A549 (cell line): ENCODE measurements at regions of chr17 and their contacts with region 1.

Region 1: DNA sequence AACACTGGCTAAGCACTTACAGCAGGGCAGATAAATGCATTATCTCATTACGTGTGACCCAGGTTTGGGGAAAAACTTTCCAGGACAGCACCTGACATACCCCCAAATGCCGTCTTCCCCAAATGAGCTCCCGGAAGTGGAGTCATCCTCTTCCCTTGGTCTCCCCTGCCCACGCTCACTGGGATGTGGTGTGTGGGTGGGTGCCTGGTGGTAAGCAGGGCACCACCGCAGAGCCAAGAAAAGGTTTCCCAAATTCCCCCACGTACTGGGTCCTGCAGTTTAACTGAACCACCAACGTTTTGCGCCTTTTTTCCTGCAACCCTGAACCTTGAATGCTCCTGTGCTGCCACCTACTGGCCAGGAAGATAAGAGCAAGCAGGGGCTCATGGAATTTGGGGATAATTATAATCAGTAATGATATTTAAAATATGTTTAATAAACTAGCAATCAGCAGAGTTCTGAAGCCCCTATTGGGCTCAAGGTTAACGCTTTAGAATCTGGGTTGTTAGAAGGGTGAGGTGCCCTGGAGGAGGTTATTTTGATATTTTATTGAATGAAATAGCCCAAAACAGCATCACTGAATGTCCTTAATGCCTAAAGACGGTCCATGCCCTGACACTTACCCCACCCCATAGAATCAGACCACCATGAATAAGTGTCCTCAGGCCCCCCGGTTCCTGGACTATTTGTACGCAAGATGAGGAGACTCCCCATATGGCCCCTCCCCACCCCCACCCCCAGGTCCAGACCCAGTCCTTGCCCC is 8.0 kb downstream of the SPPL2C start:
- DNase-seq: peak; percentile 57 to 70
- ATAC-seq: peak; percentile 25 to 73; a peak in 4 of 6 replicates
- H3K4me3 ChIP-seq: peak overlapping the region; percentile 14; the same call in 1 of the 3 replicates
- H3K27ac ChIP-seq: peak overlapping the region in 1 of 2 experiments; percentile 61; a peak in 1 of 6 replicates
- H3K4me1 ChIP-seq: 0 out of 3 replicates have a peak, but pooled peaks cover 2% of the 10 kb centered on the region
- CTCF ChIP-seq: peak; percentile 97
- EP300 ChIP-seq: no peak
- POLR2A ChIP-seq: no peak
- RAD21 ChIP-seq: peak; percentile 94 to 95

Region 2: DNA sequence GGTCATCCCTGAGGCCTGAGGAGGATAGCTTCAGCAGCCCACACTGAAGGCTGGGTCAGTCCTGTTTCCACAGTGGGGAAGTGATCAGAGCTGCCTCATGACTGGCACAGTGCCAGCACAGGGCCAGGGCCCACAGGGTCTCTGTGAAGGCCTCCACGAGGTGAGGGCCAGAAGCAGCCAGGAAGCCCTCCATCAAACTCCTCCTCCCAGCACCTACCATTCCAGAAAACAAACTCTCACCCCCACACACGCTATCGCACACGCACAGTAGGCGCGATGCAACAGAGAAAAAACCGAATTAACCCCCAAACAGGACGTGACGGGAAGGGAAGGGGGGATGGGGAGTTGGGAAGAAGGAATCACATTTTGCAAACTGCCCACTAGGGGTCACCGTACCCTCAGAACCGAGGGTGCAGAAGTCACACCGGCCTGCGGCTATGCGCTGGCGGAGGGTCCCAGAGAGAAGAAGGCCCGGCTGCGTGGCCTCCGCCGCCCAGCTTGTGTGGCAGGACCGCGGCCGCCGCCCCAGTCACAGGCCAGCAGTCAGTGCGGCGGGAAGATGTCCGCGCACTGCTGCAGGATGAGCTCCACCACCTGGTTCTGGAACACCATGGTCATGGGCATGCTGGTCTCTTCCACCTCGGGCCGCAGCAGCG is 457.7 kb before region 1 on chr17:
- CTCF ChIA-PET with region 1: interaction called, 12 read pairs
- POLR2A ChIA-PET with region 1: no interaction called
- DNase-seq: peak; percentile 88 to 95
- ATAC-seq: peak; percentile 68 to 83
- H3K4me3 ChIP-seq: no peak overlapping the region
- H3K27ac ChIP-seq: peak overlapping the region; percentile 23 to 73; a peak in 3 of 6 replicates
- H3K4me1 ChIP-seq: 0 out of 3 replicates have a peak, but pooled peaks cover 3% of the 10 kb centered on the region
- CTCF ChIP-seq: peak; percentile 97
- EP300 ChIP-seq: no peak
- POLR2A ChIP-seq: no peak
- RAD21 ChIP-seq: peak; percentile 89 to 90

Region 3: DNA sequence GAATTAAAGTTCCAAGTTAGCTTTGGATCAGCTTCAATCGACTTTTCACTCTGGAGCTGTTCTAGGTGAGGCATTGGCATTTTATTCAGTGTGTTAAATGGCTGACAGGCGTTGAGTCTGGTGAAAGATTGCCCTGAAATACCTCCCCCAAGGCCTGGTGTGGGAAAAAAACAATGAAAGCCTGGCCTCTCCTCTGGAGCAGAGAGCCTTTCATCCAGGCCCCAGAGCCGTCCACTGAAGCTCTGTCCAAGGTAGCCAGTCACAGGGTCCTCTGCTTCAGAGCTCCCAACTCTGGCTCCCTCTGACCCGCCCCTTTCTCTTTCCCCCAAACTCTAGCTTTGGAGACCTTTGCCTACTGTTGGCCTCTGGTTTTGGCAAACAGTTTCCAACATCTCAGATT is 192.2 kb before region 1 on chr17:
- CTCF ChIA-PET with region 1: interaction called, 17 read pairs
- POLR2A ChIA-PET with region 1: no interaction called
- DNase-seq: no peak
- ATAC-seq: no peak
- H3K4me3 ChIP-seq: no peak overlapping the region
- H3K27ac ChIP-seq: no peak overlapping the region
- H3K4me1 ChIP-seq: no peaks in the 10 kb centered on the region
- CTCF ChIP-seq: no peak
- EP300 ChIP-seq: no peak
- POLR2A ChIP-seq: no peak
- RAD21 ChIP-seq: no peak

Region 4: GRCh38 chr17:45677770-45678169 is 174.9 kb before region 1 on chr17:
- CTCF ChIA-PET with region 1: interaction called, 12 read pairs
- POLR2A ChIA-PET with region 1: no interaction called
- DNase-seq: peak in 1 of 2 experiments; percentile 29
- ATAC-seq: peak; percentile 48 to 54; a peak in 4 of 6 replicates
- H3K4me3 ChIP-seq: no peak overlapping the region
- H3K27ac ChIP-seq: no peak overlapping the region
- H3K4me1 ChIP-seq: no peaks in the 10 kb centered on the region
- CTCF ChIP-seq: no peak
- EP300 ChIP-seq: no peak
- POLR2A ChIP-seq: no peak
- RAD21 ChIP-seq: no peak

Region 5: DNA sequence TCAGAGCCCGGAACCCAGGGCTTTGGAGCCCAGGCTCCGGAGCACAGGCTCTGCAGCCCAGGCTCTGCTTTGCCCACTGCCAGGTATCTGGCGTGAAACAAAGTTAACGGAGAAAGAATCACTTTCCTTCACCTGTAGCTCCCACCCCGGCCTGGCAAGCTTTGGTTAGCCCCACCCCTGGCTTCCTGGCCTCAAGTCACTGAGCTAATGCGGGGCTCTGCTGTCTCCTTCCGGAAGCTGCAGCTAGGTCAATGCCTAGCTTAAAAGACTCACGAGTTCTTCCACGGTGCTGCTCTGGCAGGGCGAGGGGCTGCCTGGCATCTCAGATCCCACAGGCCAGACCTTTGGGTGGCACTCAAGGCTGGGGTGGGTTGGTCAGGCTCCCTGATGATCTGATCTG is 29.1 kb before region 1 on chr17:
- CTCF ChIA-PET with region 1: interaction called, 15 read pairs
- POLR2A ChIA-PET with region 1: no interaction called
- DNase-seq: no peak
- ATAC-seq: no peak
- H3K4me3 ChIP-seq: no peak overlapping the region
- H3K27ac ChIP-seq: no peak overlapping the region
- H3K4me1 ChIP-seq: no peaks in the 10 kb centered on the region
- CTCF ChIP-seq: no peak
- EP300 ChIP-seq: no peak
- POLR2A ChIP-seq: no peak
- RAD21 ChIP-seq: no peak

Region 6: DNA sequence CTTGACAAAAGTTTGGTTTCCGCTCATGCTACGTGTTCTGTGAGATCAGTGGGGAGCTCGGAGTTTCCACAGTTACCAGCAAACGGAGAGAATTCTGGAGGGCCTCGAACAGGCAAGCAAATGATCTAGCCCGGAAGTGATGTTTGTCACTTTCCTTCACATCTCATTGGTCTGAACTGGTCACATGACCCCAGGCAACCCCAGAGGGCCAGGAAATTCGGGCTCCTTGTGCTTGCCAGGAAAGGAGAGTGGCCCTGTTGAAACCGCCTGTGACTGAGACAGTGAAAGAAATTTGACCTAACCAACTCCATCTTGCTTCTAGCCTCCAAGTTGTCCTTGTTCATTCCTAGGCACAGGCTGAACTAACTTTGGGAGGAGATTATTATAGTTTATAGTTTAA is 15.0 kb after region 1 on chr17:
- CTCF ChIA-PET with region 1: interaction called, 67 read pairs
- POLR2A ChIA-PET with region 1: no interaction called
- DNase-seq: no peak
- ATAC-seq: no peak
- H3K4me3 ChIP-seq: no peak overlapping the region
- H3K27ac ChIP-seq: no peak overlapping the region
- H3K4me1 ChIP-seq: no peaks in the 10 kb centered on the region
- CTCF ChIP-seq: no peak
- EP300 ChIP-seq: no peak
- POLR2A ChIP-seq: no peak
- RAD21 ChIP-seq: no peak

Region 7: DNA sequence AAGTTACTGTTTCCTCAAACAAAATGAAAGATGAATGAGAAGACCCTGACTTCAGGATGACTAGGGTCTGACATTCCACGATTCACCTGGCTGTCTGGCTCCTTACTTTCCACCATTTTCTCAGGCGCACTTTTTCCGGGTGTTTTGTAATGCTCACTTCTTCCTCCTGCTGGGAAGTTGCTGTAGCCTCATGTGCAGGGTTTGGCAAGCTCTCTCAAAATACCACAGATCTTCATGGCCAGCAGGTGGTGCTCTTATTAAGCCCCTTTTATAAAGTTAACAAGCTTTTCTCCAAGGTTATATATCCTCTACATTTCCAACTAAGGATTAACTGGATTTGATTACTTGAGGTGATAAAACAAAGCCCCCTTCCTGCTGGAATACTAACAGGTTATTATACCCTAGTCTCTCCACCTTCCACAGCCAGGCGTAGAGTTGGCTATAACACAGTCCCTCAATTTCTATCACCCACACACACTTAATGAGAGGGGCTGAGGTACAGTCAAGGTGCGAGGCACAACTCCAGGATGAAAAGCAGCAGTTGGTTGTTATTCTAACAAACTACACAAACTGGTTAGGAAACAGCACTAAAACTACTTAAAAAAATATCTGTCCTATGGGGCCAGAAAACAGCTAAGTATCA is 191.7 kb after region 1 on chr17:
- CTCF ChIA-PET with region 1: no interaction called
- POLR2A ChIA-PET with region 1: no interaction called
- DNase-seq: peak; percentile 81 to 93
- ATAC-seq: peak; percentile 91 to 96
- H3K4me3 ChIP-seq: no peak overlapping the region
- H3K27ac ChIP-seq: peak overlapping the region; percentile 7 to 45; a peak in 3 of 6 replicates
- H3K4me1 ChIP-seq: peaks cover 23% of the 10 kb centered on the region
- CTCF ChIP-seq: peak; percentile 99
- EP300 ChIP-seq: no peak
- POLR2A ChIP-seq: no peak
- RAD21 ChIP-seq: peak; percentile 89 to 91